ENCODE measurements at regions of chr14 and their contacts with region 1.

Region 1: GRCh38 chr14:45144658-45145057 is 8.9 kb downstream of the FANCM start:
- DNase-seq: no peak
- ATAC-seq: no peak
- H3K4me3 Mint-ChIP-seq: no peak overlapping the region
- H3K27ac Mint-ChIP-seq: no peak overlapping the region
- H3K4me1 Mint-ChIP-seq: peaks cover 16% of the 10 kb centered on the region
- H3K27me3 Mint-ChIP-seq: no peaks in the 10 kb centered on the region

Region 2: DNA sequence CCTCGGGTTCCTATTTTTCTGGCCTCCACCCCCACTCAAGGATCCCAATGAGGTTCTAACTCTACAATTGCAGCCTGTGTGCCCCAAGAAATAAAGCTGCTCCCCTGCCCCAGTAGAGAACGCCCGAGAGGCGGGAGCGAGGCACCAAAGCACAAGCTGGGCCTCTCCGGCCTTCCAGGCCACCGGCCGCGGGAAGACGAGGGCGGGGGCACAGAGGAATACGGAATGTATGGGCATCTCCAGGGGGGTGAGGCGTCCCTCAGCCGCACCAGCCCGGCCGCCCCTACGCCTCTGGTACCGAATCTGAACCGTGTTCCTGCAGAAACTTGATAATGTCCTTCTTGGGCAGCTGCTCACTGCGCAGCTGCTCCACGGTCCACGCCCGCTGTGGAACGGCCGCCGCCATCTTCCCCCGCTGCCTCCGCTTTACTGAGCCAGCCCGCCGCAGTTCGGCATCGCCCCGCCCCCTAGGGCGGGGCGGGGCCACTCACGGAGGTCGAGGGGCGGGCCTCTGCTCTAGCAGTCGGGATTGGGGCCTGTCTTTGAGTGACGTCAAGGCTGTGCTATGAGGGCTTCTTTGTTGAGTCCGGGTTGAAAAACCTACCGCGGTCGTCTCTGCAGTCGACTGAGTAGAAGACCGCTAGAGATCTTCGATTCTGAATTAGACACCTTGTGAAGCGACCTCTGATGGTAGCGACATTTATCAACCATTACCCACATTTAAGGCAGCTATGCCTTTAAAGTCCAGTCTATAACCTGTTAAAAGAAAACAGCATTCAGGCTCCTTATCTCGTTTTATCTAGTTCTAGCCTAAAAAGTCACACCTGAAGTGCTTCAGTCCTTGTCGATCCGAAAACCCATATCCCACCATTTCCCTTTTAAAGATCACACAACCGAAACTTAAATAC is 10.4 kb before region 1 on chr14 and contains the start of gene FKBP3:
- CTCF ChIA-PET with region 1: interaction called, 11 read pairs
- POLR2A ChIA-PET with region 1: no interaction called
- DNase-seq: peak; percentile 98
- ATAC-seq: peak; percentile 95
- H3K4me3 Mint-ChIP-seq: peak within 1 kb of the TSS; percentile 90
- H3K27ac Mint-ChIP-seq: peak within 1 kb of the TSS; percentile 97
- H3K4me1 Mint-ChIP-seq: peaks cover 36% of the 10 kb centered on the region
- H3K27me3 Mint-ChIP-seq: no peaks in the 10 kb centered on the region
- total RNA-seq, gene FKBP3: 70.2 to 74.9 TPM

Region 3: GRCh38 chr14:45308745-45309397 is 164.2 kb after region 1 on chr14:
- CTCF ChIA-PET with region 1: no interaction called
- POLR2A ChIA-PET with region 1: no interaction called
- DNase-seq: no peak
- ATAC-seq: no peak
- H3K4me3 Mint-ChIP-seq: no peak overlapping the region
- H3K27ac Mint-ChIP-seq: no peak overlapping the region
- H3K4me1 Mint-ChIP-seq: no peaks in the 10 kb centered on the region
- H3K27me3 Mint-ChIP-seq: no peaks in the 10 kb centered on the region